A549 (cell line): ENCODE measurements at regions of chr20 and their contacts with region 1.

Region 1: DNA sequence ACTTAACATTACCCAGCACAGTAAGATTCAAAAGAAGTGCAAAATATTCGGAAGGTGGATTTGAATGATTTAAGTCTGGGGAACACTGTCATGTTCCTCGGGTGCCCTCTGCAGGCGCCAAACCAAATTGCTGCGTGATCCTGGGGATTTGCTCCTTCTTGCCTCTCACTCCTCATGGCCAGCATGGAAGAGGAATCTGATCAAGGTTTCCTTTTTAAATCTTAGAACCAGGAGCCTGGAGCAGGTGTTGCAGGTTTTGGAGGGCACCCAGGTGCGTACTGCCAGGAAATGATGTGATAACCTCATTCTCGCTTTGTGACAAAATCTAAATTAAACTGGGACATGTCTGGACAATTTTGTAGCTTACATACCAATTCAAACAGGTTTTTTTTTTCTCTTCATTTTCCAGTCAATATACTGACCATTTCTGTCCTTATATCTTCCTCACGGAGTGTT is 8.1 kb upstream of the PFDN4 start:
- DNase-seq: peak; percentile 62 to 85
- ATAC-seq: peak; percentile 68 to 75
- H3K4me3 ChIP-seq: no peak overlapping the region
- H3K27ac ChIP-seq: peak overlapping the region; percentile 64 to 84; a peak in 5 of 6 replicates
- H3K4me1 ChIP-seq: peaks cover 39% of the 10 kb centered on the region
- CTCF ChIP-seq: peak; percentile 95
- EP300 ChIP-seq: no peak
- POLR2A ChIP-seq: no peak
- RAD21 ChIP-seq: peak; percentile 96 to 98

Region 2: DNA sequence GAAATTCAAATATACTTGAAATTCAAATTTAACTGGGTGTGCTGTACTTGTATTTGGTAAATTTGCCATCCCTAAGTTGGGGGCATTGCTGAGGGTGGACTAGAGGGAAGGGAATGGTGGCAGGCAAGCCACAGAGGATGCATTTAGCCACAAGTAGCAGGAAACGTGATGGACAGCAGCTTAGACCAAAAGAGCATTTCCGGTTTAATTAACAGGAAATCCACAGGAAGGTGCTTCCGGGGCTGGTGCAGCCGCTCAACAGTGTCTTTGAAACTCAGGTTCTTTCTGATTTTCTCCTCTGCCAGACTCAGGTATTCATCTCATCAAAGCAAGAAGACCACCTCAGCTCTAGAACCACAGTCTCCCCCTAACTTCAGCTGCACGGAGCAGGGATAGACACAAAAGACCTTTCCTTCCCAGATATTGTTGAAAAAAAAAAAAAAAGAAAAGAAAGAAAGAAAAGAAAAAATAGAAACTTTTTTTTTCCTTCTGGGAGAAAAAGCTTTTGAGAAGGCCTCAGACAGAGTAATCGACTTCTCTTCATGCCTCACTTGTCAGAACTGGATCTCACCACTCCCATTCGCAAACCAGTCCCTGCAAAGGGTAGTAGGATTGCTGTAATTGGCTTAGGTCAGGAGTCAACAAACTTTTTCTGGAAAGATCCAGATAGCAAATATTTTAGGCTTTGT is 121.3 kb before region 1 on chr20:
- CTCF ChIA-PET with region 1: interaction called, 15 read pairs
- POLR2A ChIA-PET with region 1: no interaction called
- DNase-seq: no peak
- ATAC-seq: no peak
- H3K4me3 ChIP-seq: no peak overlapping the region
- H3K27ac ChIP-seq: no peak overlapping the region
- H3K4me1 ChIP-seq: peaks cover 20% of the 10 kb centered on the region
- CTCF ChIP-seq: no peak
- EP300 ChIP-seq: no peak
- POLR2A ChIP-seq: no peak
- RAD21 ChIP-seq: no peak

Region 3: DNA sequence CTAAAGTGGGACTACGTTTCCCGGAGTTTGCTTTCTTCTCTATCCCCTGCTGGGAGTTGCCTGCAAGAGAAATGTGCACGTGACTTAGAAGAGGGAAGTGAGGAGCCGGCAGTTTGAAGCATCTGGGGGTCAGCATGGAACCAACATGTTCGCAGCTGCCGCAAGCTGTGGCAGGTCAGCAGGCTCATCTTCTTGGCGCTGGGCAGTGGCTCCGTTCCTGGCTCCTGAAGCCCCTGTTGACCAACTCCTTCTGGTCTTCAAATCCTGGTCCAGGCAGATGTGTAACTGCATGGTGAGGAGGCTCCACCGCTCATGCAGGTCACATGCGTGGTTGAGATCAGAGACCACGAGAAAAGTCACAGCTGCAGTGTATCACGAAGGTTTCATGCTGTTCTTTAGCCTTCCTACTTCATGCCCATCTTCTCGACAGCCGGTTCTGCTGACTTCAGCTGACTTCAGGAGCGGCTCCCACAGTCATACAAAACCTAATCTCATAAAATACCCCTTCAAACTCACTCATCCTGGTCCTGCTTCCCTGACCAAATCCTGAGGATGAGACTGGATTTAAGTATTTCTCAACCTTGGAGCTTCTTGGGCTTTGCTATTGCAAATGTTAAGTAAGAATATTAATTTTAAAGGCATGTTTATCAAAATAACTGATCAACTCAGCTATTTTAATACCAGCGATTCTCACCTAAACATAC is 84.4 kb before region 1 on chr20:
- CTCF ChIA-PET with region 1: interaction called, 23 read pairs
- POLR2A ChIA-PET with region 1: no interaction called
- DNase-seq: peak; percentile 77 to 92
- ATAC-seq: peak; percentile 84 to 88
- H3K4me3 ChIP-seq: no peak overlapping the region
- H3K27ac ChIP-seq: peak overlapping the region; percentile 94 to 98
- H3K4me1 ChIP-seq: peaks cover 76% of the 10 kb centered on the region
- CTCF ChIP-seq: no peak
- EP300 ChIP-seq: no peak
- POLR2A ChIP-seq: no peak
- RAD21 ChIP-seq: no peak

Region 4: DNA sequence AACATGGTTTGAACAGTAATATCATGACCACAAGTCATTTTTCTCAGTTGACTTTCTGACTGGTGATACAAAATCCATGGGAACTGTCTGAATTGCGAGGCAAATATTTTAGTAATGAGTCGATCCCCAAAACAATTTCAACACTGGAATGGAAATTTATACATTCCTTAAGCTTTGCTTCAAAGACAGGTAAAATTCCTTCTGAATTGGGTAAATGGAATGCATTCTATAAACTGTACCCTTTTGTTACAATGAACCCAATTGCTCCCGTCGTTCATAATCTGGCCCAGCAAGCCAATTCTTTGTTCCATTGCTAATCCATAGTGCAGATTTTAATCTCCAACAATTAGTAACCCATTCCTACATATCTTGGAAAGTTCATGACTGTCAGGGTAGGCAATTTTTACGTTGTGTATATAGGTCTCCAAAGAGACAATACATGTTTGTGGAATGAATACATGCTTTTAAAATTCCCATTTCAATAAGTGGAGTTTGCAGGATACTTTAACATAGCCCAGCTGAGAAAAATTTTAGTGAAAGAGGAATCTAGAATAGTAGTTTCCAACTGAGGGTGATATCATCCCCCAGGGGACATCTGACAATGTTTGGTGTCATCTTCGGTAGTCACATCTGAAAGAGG is 58.7 kb before region 1 on chr20:
- CTCF ChIA-PET with region 1: interaction called, 12 read pairs
- POLR2A ChIA-PET with region 1: no interaction called
- DNase-seq: peak in 1 of 2 experiments; percentile 78
- ATAC-seq: peak; percentile 56 to 67; a peak in 5 of 6 replicates
- H3K4me3 ChIP-seq: no peak overlapping the region
- H3K27ac ChIP-seq: peak overlapping the region; percentile 75 to 88
- H3K4me1 ChIP-seq: peaks cover 53% of the 10 kb centered on the region
- CTCF ChIP-seq: no peak
- EP300 ChIP-seq: peak; percentile 73 to 93; a peak in 4 of 5 replicates
- POLR2A ChIP-seq: no peak
- RAD21 ChIP-seq: no peak; a peak in 1 of 5 replicates

Region 5: DNA sequence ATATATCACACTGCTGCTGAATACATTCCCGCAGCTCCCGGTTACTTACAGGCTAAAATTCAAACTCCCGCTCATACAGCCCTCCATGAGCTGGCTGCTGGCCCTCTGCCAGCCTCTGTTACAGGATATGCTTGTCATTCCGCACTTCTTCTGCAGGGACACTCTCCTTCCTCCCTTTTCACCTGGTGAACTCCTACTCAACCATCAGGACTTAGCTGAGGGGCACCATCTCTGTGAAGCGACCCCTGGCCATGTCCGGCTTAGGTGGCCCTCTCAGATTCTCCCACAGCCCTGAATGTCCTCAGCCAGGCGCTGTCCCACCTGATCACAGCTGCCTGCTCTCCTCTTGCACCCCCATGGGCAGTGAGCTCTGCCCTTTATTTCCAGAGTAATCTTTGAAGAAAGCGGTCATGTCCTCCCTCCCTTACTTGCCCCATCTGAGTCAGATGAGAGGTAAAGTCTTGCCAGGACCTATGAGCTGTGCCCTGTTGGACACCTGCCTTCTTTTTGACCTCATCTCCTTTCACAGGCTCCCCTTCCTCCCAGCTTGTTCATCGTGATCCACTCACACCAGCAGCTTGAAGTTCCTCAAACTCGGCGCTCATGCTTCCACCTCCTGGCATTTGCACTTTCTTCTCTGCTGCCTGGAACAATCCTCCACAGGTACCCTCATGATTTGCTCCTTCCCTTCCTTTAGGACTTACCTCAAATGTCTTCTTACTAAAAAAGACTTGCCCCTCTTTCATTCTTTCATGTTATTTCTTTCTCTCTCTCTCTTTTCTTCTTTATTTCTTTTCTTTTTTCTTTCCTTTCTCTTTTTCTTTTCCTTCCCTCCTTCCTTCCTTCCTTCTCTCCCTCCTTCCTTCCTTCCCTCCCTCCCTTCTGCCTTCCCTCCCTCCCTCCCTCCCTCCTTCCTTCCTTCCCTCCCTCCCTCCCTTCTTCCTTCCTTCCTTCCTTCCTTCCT is 31.6 kb before region 1 on chr20:
- CTCF ChIA-PET with region 1: interaction called, 97 read pairs
- POLR2A ChIA-PET with region 1: no interaction called
- DNase-seq: peak; percentile 57 to 92
- ATAC-seq: peak; percentile 40 to 75
- H3K4me3 ChIP-seq: peak overlapping the region; percentile 83
- H3K27ac ChIP-seq: peak overlapping the region; percentile 93 to 100
- H3K4me1 ChIP-seq: peaks cover 55% of the 10 kb centered on the region
- CTCF ChIP-seq: no peak
- EP300 ChIP-seq: no peak
- POLR2A ChIP-seq: peak; percentile 21; the same call in 1 of the 2 replicates
- RAD21 ChIP-seq: no peak

Region 6: GRCh38 chr20:54214566-54214965 is 14.8 kb after region 1 on chr20:
- CTCF ChIA-PET with region 1: interaction called, 17 read pairs
- POLR2A ChIA-PET with region 1: no interaction called
- DNase-seq: no peak
- ATAC-seq: no peak
- H3K4me3 ChIP-seq: no peak overlapping the region
- H3K27ac ChIP-seq: no peak overlapping the region
- H3K4me1 ChIP-seq: peaks cover 6% of the 10 kb centered on the region
- CTCF ChIP-seq: no peak
- EP300 ChIP-seq: no peak
- POLR2A ChIP-seq: no peak
- RAD21 ChIP-seq: no peak